PC-3 (cell line): ENCODE measurements at regions of chr3 and their contacts with region 1.

Region 1: GRCh38 chr3:12601072-12601471 is 44.2 kb downstream of the MKRN2 start:
- DNase-seq: peak; percentile 28
- ATAC-seq: peak; percentile 68
- H3K4me3 ChIP-seq: no peak overlapping the region
- H3K27ac ChIP-seq: no peak overlapping the region
- H3K4me1 ChIP-seq: no peaks in the 10 kb centered on the region
- H3K27me3 ChIP-seq: no peaks in the 10 kb centered on the region
- CTCF ChIP-seq: peak; percentile 52

Region 2: DNA sequence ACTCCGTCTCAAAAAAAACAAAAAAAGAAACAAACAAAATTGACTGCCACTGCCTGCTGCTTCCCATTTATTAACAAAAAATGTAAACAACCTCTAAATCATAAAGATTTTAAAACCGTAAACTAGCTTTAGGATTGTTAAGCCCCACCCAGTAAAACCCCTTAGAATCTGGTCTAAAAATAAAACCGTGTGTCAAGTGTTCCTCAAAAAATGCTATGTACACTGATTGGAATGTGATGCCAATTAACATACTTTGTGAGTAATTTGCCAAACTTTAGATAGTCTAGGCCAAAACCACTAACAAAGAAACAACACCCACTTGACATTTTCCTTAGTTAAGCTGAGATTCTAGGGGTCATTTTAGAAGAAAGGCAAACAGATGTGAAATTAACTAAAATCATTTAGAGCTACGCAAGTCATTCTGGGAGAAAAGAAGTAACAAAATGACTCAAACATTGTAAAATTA is 57.6 kb after region 1 on chr3:
- CTCF ChIA-PET with region 1: no interaction called
- POLR2A ChIA-PET with region 1: no interaction called
- intact Hi-C with region 1: loop called (anchors 2 kb)
- DNase-seq: peak; percentile 50
- ATAC-seq: no peak
- H3K4me3 ChIP-seq: no peak overlapping the region
- H3K27ac ChIP-seq: no peak overlapping the region
- H3K4me1 ChIP-seq: peaks cover 30% of the 10 kb centered on the region
- H3K27me3 ChIP-seq: no peaks in the 10 kb centered on the region
- CTCF ChIP-seq: no peak